ENCODE measurements at regions of chr2 and their contacts with region 1.

Region 1: DNA sequence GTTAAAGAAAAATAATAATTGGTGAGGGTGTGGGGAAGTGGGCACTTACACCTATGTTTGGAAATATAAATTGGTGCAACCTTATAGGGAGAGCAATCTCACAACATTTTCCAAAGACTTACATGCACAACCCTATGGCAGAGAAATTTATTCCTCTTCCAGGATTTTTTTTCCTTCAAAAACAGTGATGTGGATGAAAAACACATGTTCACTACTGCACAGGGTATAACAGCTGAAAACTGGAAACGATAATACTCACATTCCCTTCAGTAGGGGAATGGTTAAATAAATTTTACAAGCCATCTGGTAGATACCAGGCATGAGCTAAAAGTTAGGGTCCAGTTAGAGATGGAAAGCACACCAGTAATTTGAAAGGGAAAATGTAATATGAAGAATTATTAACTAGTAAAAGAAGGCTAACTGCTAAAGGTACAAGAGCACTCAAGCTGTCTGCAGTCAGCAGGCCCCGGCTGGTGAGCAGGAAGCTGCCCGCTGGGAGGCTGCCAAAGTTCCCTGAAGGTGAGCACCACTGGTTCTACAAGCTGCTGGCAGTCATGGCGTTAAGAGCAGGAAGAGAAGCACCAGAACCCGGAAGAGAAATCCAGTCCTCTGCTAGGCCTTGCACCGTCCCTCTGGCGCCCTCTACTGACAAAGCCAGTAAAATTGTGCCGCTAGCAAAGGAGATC is 28.4 kb upstream of the CASP8 start:
- DNase-seq: peak; percentile 98
- H3K4me3 Mint-ChIP-seq: peak overlapping the region; percentile 71
- H3K27ac Mint-ChIP-seq: peak overlapping the region; percentile 84
- H3K4me1 Mint-ChIP-seq: peaks cover 51% of the 10 kb centered on the region
- H3K27me3 Mint-ChIP-seq: no peaks in the 10 kb centered on the region

Region 2: GRCh38 chr2:200525882-200526651 is 705.9 kb before region 1 on chr2 and contains the start of gene SGO2:
- CTCF ChIA-PET with region 1: no interaction called
- intact Hi-C with region 1: loop called (anchors 2 kb)
- DNase-seq: peak; percentile 98
- H3K4me3 Mint-ChIP-seq: peak within 1 kb of the TSS; percentile 90
- H3K27ac Mint-ChIP-seq: peak within 1 kb of the TSS; percentile 84
- H3K4me1 Mint-ChIP-seq: peaks cover 17% of the 10 kb centered on the region
- H3K27me3 Mint-ChIP-seq: no peaks in the 10 kb centered on the region
- total RNA-seq, gene SGO2: 39.7 to 40.0 TPM

Region 3: GRCh38 chr2:200888704-200889625 is 343.0 kb before region 1 on chr2 and contains the starts of genes NIF3L1 and PPIL3:
- CTCF ChIA-PET with region 1: interaction called, 8 read pairs
- intact Hi-C with region 1: loop called (anchors 1 kb)
- DNase-seq: peak; percentile 99
- H3K4me3 Mint-ChIP-seq: peak within 1 kb of the TSS; percentile 88
- H3K27ac Mint-ChIP-seq: peak within 1 kb of the TSS; percentile 97
- H3K4me1 Mint-ChIP-seq: peaks cover 50% of the 10 kb centered on the region
- H3K27me3 Mint-ChIP-seq: no peaks in the 10 kb centered on the region
- total RNA-seq, gene NIF3L1: 31.6 to 33.3 TPM
- total RNA-seq, gene PPIL3: 81.3 to 82.2 TPM

Region 4: GRCh38 chr2:201130524-201131186 is 101.3 kb before region 1 on chr2:
- CTCF ChIA-PET with region 1: interaction called, 8 read pairs
- intact Hi-C with region 1: loop called (anchors 1 kb)
- DNase-seq: peak; percentile 68
- H3K4me3 Mint-ChIP-seq: peak overlapping the region; percentile 76
- H3K27ac Mint-ChIP-seq: peak overlapping the region; percentile 96
- H3K4me1 Mint-ChIP-seq: peaks cover 56% of the 10 kb centered on the region
- H3K27me3 Mint-ChIP-seq: no peaks in the 10 kb centered on the region

Region 5: DNA sequence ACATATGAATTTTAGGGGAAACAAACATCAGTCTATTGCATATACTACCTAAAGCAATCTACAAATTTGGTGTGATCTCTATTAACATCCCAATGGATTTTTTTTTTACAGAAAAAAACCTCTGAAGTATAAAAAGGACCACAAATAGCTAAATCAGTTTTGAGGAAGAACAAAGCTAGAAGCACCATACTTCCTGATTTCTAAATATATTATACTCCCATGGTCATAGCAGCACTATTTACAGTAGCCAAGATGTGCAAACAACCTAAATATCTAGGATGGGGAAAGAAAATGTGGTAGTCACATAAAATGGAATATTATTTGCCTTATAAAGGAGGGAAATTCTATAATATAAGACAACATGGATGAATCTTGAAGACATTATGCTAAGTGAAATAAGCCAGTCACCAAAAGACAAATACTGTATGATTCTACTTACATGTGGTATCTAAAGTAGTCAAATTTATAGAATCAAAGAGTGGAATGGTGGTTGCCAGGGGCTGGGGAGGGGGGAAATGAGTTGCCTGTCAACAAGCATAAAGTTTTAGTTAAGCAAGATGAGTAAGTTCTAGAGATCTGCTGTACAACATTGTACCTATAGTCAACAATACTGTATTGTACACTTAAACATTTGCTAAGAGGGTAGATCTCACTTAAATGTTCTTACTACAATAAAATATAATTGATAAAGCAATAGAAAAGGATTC is 10.8 kb after region 1 on chr2:
- CTCF ChIA-PET with region 1: interaction called, 10 read pairs
- intact Hi-C with region 1: no loop called
- DNase-seq: no peak
- H3K4me3 Mint-ChIP-seq: no peak overlapping the region
- H3K27ac Mint-ChIP-seq: no peak overlapping the region
- H3K4me1 Mint-ChIP-seq: peaks cover 41% of the 10 kb centered on the region
- H3K27me3 Mint-ChIP-seq: no peaks in the 10 kb centered on the region

Region 6: DNA sequence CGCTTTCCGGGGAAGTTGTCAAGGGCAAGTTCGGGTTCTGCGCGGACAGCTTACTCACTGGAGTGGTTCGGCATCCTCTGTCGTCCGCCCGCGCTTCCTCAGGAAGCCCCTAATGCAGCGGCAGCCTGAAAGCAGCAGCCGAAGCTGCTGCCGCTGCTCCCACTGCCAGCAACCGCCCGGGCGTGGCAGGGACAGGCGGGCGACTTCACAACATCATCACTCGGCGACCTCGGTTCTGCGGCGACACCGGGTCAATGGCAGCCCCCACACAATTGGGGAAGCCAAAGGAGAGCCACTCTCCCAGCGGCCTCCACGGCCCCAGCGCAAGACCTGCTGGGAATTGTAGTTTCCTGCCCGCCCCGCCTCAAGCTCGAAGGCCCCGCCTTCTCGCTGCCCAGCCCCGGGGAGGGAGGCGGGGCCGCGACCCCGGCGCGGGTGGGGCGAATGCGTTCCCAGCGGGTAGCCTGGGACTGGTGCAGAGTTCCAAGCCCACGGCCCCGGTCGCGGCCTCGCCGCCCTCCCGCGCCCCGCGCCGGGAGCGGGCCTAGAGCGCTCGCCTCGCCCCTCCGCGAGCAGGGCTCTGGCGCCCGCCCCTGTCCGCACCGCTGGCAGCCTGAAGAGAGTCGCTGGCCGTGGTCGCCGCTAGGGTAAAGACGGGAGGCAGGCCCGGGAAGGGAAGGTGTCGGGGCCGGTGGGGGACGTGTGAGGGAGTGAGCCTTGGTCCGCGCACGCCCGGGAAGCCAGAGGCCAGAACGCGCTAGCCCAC is 219.6 kb after region 1 on chr2 and contains the starts of genes STRADB and TRAK2:
- CTCF ChIA-PET with region 1: interaction called, 5 read pairs
- intact Hi-C with region 1: loop called (anchors 1 kb)
- DNase-seq: peak; percentile 96
- H3K4me3 Mint-ChIP-seq: peak within 1 kb of the TSS; percentile 95
- H3K27ac Mint-ChIP-seq: peak within 1 kb of the TSS; percentile 94
- H3K4me1 Mint-ChIP-seq: peaks cover 51% of the 10 kb centered on the region
- H3K27me3 Mint-ChIP-seq: no peaks in the 10 kb centered on the region
- total RNA-seq, gene STRADB: 17.6 to 19.1 TPM
- total RNA-seq, gene TRAK2: 10.4 TPM

Measured in activated naive CD4-positive, alpha-beta T cell treated with anti-CD3 and anti-CD28 coated beads for 36 hours (primary cell).